ENCODE measurements at regions of chr6 and their contacts with region 1.

Region 1: GRCh38 chr6:152897799-152898399 is 84.9 kb downstream of the FBXO5 start:
- DNase-seq: no peak
- H3K4me3 ChIP-seq: no peak overlapping the region
- CTCF ChIP-seq: peak; percentile 95

Region 2: GRCh38 chr6:152750694-152751093 is 147.2 kb before region 1 on chr6 and contains the start of gene VIP:
- CTCF ChIA-PET with region 1: interaction called, 22 read pairs
- POLR2A ChIA-PET with region 1: no interaction called
- DNase-seq: no peak
- H3K4me3 ChIP-seq: no peak within 1 kb of the TSS
- CTCF ChIP-seq: no peak

Region 3: GRCh38 chr6:152863618-152864326 is 34.1 kb before region 1 on chr6:
- CTCF ChIA-PET with region 1: interaction called, 35 read pairs
- POLR2A ChIA-PET with region 1: no interaction called
- DNase-seq: peak; percentile 26
- H3K4me3 ChIP-seq: no peak overlapping the region
- CTCF ChIP-seq: peak; percentile 64